Gastrocnemius medialis (tissue), 4 donors: ENCODE measurements at regions of chr6 and their contacts with region 1.

Region 1: DNA sequence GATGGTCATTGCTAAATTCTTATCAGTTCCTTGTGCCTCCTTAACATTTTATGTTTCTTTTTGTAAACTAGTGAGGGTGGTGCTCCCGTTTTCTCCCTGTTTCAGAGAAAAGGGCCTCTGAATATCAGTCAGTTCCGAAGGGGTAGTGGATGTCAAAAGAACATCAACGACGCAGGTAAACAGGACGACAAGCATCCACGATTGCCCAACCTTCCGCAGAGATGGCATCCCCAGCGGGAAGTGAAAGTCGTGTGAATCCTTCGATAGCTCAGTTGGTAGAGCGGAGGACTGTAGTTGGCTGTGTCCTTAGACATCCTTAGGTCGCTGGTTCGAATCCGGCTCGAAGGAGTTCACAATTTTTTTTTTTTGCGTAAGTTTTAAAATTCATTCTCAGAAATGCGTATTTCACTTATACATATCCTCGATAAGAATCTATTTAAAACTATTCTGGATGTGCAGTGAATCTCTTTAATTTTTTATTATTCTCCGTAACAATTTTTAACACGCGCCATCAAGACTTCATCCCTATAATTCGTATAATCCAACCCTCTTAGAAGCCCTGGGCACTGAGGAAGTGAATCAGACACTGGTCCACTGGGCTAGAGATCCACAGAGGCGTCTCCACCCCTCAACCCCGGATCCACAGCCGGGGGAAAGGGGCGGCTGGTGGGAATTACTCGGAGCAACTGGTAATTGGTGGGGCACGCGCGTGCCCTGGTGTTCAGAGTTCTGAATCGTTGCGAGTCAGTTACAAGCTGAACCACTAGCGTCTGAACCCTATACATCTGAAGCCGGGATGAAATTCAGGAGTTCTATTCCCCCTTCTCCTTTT is 27.9 kb upstream of the ABT1 start:
- DNase-seq: peak; percentile 74 to 88
- ATAC-seq: peak; percentile 89 to 91
- H3K4me3 ChIP-seq: peak overlapping the region; percentile 37 to 59 (median 50)
- H3K27ac ChIP-seq: peak overlapping the region; percentile 19 to 54 (median 43)
- H3K4me1 ChIP-seq: peaks cover 2 to 7% of the 10 kb centered on the region in 2 donors
- H3K27me3 ChIP-seq: no peaks in the 10 kb centered on the region
- CTCF ChIP-seq: no peak
- POLR2A ChIP-seq: no peak

Region 2: GRCh38 chr6:26175428-26176181 is 393.2 kb before region 1 on chr6:
- in situ Hi-C with region 1: no loop called
- intact Hi-C with region 1: loop called (anchors 10 kb)
- DNase-seq: no peak
- ATAC-seq: no peak
- H3K4me3 ChIP-seq: no peak overlapping the region
- H3K27ac ChIP-seq: no peak overlapping the region
- H3K4me1 ChIP-seq: peaks cover 4 to 6% of the 10 kb centered on the region in 2 donors
- H3K27me3 ChIP-seq: no peaks in the 10 kb centered on the region
- CTCF ChIP-seq: peak in 3 of 5 experiments; percentile 17 to 58 (median 51)
- POLR2A ChIP-seq: no peak

Region 3: DNA sequence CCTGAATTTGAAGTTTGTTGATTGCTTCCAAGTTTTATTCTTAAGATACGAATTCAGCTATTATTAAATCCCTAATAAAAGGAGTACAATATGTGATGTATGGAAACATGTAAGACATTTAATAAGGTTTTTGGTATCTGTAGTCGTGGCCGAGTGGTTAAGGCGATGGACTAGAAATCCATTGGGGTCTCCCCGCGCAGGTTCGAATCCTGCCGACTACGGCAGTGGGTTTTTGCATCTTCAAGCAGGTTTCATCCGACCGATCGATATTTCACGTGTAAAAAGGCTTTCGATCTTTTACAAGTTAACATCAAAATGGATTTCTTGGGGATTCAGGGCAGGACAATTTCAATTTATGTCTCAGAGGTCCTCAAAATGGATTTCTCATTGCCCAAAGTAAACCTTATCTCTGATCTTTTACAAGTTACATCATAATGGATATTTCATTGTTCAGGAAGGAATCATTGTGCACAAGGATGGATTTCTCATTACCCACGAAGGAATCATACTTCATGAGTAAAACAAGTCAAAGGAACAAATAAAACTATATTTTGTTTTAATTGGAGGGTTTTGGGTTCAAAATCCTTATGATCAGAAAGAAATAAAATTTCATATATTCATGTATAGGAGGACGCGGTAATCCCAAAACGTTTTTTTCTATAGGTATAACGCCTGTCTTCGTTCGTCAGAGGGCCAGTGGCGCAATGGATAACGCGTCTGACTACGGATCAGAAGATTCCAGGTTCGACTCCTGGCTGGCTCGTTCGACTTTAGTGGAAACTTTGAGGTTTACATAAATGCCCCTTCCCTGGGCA is 241.2 kb before region 1 on chr6:
- in situ Hi-C with region 1: loop called in 1 of 4 experiments (anchors 10 kb)
- intact Hi-C with region 1: no loop called
- DNase-seq: no peak
- ATAC-seq: no peak
- H3K4me3 ChIP-seq: peak overlapping the region in 1 of 4 donors; percentile 15
- H3K27ac ChIP-seq: no peak overlapping the region
- H3K4me1 ChIP-seq: no peaks in the 10 kb centered on the region
- H3K27me3 ChIP-seq: peaks cover 56 to 70% (median 56%) of the 10 kb centered on the region in 3 donors
- CTCF ChIP-seq: no peak
- POLR2A ChIP-seq: no peak

Region 4: DNA sequence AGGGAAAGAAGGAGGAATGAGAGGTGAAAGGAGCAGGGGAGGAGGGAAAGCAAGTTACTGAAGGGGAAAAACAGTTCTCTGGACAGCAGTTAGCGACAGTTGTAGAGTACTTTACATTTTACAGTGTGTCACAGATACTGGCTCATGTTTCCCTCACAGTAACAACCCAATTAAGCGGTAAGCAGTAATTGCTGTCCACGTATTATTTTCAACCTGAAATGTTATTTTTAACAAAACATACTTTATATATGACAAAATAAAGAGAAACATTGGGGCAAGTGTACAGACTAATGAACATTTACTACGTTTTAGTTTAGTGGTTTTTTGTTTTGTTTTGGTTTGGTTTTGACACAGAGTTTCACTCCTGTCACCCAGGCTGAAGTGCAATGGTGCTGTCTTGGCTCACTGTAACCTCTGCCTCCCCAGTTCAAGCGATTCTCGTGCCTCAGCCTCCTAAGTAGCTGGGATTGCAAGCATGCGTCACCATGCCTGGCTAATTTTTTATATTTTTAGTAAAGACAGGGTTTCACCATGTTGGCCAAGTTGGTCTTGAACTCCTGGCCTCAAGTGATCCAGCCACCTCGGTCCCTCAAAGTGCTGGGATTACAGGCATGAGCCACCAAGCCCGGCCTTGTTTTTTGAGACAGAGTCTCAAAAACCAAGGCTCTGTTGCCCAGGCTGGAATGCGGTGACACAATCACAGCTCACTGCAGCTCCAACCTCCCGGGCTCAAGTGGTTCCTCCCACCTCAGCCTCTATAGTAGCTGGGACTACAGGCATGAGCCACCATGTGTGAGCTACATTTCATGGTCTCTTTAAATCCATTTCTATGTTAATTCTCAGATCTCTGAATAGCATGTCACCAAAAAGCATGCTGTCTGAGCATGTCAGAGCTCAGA is 226.5 kb before region 1 on chr6:
- in situ Hi-C with region 1: loop called in 1 of 4 experiments (anchors 10 kb)
- intact Hi-C with region 1: loop called (anchors 5 kb)
- DNase-seq: no peak
- ATAC-seq: no peak
- H3K4me3 ChIP-seq: no peak overlapping the region
- H3K27ac ChIP-seq: no peak overlapping the region
- H3K4me1 ChIP-seq: no peaks in the 10 kb centered on the region
- H3K27me3 ChIP-seq: peaks cover 4 to 16% (median 8%) of the 10 kb centered on the region in 3 donors
- CTCF ChIP-seq: no peak
- POLR2A ChIP-seq: no peak

Region 5: DNA sequence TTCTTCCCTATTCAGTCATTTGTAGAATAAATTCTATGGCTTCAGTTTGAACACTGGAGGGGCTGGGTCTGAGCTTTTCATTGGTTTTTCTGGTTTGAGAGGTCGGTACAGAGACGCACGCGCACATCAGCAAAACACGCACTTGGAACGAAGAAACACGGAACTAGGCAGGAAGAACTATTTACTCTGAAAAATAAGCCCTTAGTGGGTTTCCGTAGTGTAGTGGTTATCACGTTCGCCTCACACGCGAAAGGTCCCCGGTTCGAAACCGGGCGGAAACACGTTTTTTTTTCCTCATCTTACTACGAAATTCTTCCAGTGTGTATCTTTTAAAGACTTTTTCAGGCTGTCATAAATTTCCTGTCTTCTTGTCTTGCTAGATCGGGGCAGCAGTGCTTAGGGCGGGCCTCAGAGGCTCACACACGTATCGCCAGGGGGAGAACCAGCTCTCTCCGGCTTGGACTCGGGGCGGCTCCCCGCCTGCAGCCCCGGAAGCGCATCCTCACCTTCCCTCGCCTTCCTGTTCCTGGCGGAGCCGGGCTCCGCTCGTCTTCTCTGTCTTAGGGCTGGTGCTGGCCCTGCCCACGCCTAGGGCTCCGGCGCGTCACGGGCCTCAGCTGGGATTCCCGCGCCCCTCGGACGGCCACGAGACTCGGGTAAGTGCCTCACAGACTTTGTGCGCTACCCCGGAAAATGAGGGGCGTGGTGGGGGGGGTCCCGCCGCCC is 30.8 kb before region 1 on chr6 and contains the start of gene HMGN4:
- in situ Hi-C with region 1: no loop called
- intact Hi-C with region 1: loop called (anchors 1 kb)
- DNase-seq: peak; percentile 58 to 72
- ATAC-seq: peak; percentile 68 to 85
- H3K4me3 ChIP-seq: peak within 1 kb of the TSS; percentile 75 to 89 (median 89)
- H3K27ac ChIP-seq: peak within 1 kb of the TSS; percentile 89 to 95 (median 92)
- H3K4me1 ChIP-seq: peaks cover 39 to 41% of the 10 kb centered on the region in 2 donors
- H3K27me3 ChIP-seq: no peaks in the 10 kb centered on the region
- CTCF ChIP-seq: no peak
- POLR2A ChIP-seq: peak; percentile 47 to 62
- total RNA-seq, gene HMGN4: 20.1 to 58.7 (median 28.4) TPM

Region 6: DNA sequence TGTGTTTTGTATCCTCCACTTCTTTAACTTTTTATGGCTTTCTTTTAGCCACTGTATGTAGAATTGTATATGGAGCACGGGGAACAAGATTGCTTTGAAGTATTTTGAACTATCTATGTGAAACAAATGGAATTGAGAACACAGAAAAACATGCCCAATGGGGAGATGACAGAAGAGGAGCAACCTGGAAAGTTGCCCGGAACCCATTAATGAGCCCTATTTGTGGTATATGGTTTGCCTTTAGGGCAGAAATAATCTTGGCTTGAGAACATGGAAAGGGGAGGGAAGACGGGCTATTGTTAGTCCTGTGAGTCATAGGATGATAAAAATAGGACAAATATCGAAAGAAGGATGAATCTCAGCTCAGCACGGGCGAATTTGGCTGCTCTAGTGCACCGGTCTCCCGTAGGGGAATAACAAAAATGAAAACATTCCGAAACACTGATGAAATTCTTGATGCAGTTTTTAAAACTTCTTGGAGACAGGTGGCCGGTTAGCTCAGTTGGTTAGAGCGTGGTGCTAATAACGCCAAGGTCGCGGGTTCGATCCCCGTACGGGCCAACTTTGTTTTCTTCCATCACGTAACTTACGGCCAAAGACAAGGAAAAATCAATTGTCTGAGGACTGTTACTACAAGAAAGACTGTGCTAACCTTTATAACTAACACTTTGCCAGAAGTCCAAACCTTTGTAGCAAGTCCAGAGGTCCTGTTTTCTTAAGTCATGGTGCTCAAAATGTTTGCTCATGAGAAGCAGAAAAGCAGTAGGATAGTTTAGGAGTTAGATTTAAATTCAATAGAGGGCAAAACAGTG is 15.0 kb before region 1 on chr6:
- in situ Hi-C with region 1: no loop called
- intact Hi-C with region 1: loop called (anchors 1 kb)
- DNase-seq: peak; percentile 44 to 72
- ATAC-seq: peak; percentile 96 to 97
- H3K4me3 ChIP-seq: peak overlapping the region; percentile 52 to 63 (median 60)
- H3K27ac ChIP-seq: peak overlapping the region; percentile 75 to 85 (median 79)
- H3K4me1 ChIP-seq: peaks cover 10 to 13% of the 10 kb centered on the region in 2 donors
- H3K27me3 ChIP-seq: no peaks in the 10 kb centered on the region
- CTCF ChIP-seq: no peak
- POLR2A ChIP-seq: no peak

Region 7: GRCh38 chr6:26743941-26744699 is 175.3 kb after region 1 on chr6:
- in situ Hi-C with region 1: no loop called
- intact Hi-C with region 1: no loop called
- DNase-seq: no peak
- ATAC-seq: no peak
- H3K4me3 ChIP-seq: no peak overlapping the region
- H3K27ac ChIP-seq: no peak overlapping the region
- H3K4me1 ChIP-seq: no peaks in the 10 kb centered on the region
- H3K27me3 ChIP-seq: peaks cover 26 to 40% (median 33%) of the 10 kb centered on the region in 3 donors
- CTCF ChIP-seq: no peak
- POLR2A ChIP-seq: no peak